Activated CD4-positive, alpha-beta T cell treated with anti-CD3 and anti-CD28 coated beads for 36 hours (primary cell): ENCODE measurements at regions of chr12 and their contacts with region 1.

Region 1: GRCh38 chr12:116015525-116015924 is 262.0 kb downstream of the MED13L start:
- DNase-seq: no peak
- ATAC-seq: peak; percentile 81
- H3K4me3 Mint-ChIP-seq: no peak overlapping the region
- H3K27ac Mint-ChIP-seq: peak overlapping the region; percentile 23
- H3K4me1 Mint-ChIP-seq: peaks cover 5% of the 10 kb centered on the region
- H3K27me3 Mint-ChIP-seq: no peaks in the 10 kb centered on the region

Region 2: DNA sequence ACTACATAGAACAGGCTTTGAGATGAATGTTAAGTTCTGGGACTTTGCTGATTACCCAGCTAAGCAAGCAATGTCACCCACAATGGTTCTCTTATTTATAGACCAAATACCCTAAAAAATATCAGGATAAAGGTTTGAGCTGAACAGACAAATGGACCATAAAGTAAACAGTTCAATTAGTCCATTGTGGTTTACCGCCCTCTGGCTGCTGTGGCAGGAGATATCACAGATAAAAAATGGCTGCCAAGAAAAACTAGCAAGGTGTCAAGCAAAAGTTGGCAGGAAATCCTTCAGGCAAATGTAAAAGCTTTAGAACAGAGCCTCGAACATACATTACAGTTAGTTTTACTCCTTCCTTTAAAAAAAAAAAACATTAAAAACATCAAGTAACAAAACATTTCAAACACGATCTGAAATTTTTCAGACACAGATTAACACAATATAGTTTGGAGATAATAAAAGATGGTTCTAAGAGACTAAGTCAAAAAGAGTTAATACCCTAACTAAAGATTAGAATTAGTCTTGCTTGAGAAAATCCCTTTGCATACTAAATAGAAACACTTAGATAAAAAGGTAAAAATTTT is 220.7 kb after region 1 on chr12:
- CTCF ChIA-PET with region 1: interaction called, 10 read pairs
- POLR2A ChIA-PET with region 1: no interaction called
- intact Hi-C with region 1: loop called (anchors 1 kb)
- DNase-seq: peak; percentile 66
- ATAC-seq: peak; percentile 60
- H3K4me3 Mint-ChIP-seq: peak overlapping the region; percentile 14
- H3K27ac Mint-ChIP-seq: peak overlapping the region; percentile 63
- H3K4me1 Mint-ChIP-seq: peaks cover 35% of the 10 kb centered on the region
- H3K27me3 Mint-ChIP-seq: no peaks in the 10 kb centered on the region